Activated CD8-positive, alpha-beta T cell treated with anti-CD3 and anti-CD28 coated beads for 36 hours (primary cell): ENCODE measurements at regions of chr11 and their contacts with region 1.

Region 1: DNA sequence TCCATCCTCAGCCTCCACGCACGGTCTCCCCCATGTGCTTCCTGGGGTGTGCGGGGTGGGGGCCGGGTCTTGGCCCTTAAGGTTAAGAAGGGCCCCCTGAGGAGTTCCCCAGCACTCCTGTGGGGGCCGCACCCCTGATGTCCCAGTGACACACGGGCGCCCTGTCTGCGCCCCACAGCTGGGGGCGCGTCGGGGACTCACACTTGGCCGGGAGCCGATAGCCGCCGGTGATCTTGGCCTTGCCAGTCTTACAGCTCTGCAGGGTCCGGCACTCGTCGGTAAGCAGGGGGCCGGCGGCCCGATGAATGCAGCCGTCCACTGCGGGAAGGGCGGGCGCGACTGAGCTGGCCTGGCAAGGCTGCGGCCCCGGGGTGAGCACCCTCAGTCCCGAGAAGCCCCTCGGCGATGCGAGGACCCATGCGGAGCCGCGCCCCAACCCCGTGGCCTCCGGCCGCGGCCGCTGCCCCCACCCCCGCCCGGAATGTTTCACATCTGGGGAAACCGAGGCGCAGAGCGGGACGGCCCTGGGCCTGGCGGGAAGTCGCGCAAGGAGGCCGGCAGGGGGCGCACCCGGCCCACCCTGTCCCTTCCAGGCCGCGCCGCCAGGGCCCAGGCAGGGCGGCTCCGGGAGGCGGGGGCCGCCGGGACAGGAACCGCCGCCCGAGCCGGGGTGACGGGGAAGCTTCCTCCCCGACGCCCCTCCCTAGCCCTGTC is 13.9 kb downstream of the OTUB1 start:
- DNase-seq: peak; percentile 76
- ATAC-seq: peak; percentile 77
- H3K4me3 Mint-ChIP-seq: peak overlapping the region; percentile 15
- H3K27ac Mint-ChIP-seq: no peak overlapping the region
- H3K4me1 Mint-ChIP-seq: peaks cover 6% of the 10 kb centered on the region
- H3K27me3 Mint-ChIP-seq: peaks cover 4% of the 10 kb centered on the region
- CTCF ChIP-seq: peak; percentile 87

Region 2: GRCh38 chr11:64013141-64013896 is 13.1 kb after region 1 on chr11:
- CTCF ChIA-PET with region 1: interaction called, 11 read pairs
- POLR2A ChIA-PET with region 1: interaction called, 4 read pairs
- intact Hi-C with region 1: no loop called
- DNase-seq: no peak
- ATAC-seq: no peak
- H3K4me3 Mint-ChIP-seq: no peak overlapping the region
- H3K27ac Mint-ChIP-seq: no peak overlapping the region
- H3K4me1 Mint-ChIP-seq: no peaks in the 10 kb centered on the region
- H3K27me3 Mint-ChIP-seq: peaks cover 7% of the 10 kb centered on the region
- CTCF ChIP-seq: no peak

Region 3: GRCh38 chr11:64036087-64037026 is 36.2 kb after region 1 on chr11:
- CTCF ChIA-PET with region 1: interaction called, 18 read pairs
- POLR2A ChIA-PET with region 1: interaction called, 3 read pairs
- intact Hi-C with region 1: no loop called
- DNase-seq: peak; percentile 21
- ATAC-seq: peak; percentile 66
- H3K4me3 Mint-ChIP-seq: no peak overlapping the region
- H3K27ac Mint-ChIP-seq: no peak overlapping the region
- H3K4me1 Mint-ChIP-seq: peaks cover 5% of the 10 kb centered on the region
- H3K27me3 Mint-ChIP-seq: peaks cover 41% of the 10 kb centered on the region
- CTCF ChIP-seq: no peak

Region 4: GRCh38 chr11:64152841-64153691 is 152.9 kb after region 1 on chr11:
- CTCF ChIA-PET with region 1: interaction called, 151 read pairs
- POLR2A ChIA-PET with region 1: interaction called, 3 read pairs
- intact Hi-C with region 1: loop called (anchors 5 kb)
- DNase-seq: peak; percentile 77
- ATAC-seq: peak; percentile 98
- H3K4me3 Mint-ChIP-seq: no peak overlapping the region
- H3K27ac Mint-ChIP-seq: no peak overlapping the region
- H3K4me1 Mint-ChIP-seq: peaks cover 4% of the 10 kb centered on the region
- H3K27me3 Mint-ChIP-seq: no peaks in the 10 kb centered on the region
- CTCF ChIP-seq: peak; percentile 99